Uterus (tissue), 4 donors: ENCODE measurements at regions of chr14 and their contacts with region 1.

Region 1: GRCh38 chr14:34875031-34875922 is at the start of gene BAZ1A:
- DNase-seq: peak; percentile 67 to 68
- H3K4me3 ChIP-seq: peak within 1 kb of the TSS; percentile 83 to 92
- H3K27ac ChIP-seq: peak within 1 kb of the TSS; percentile 97 to 100
- H3K4me1 ChIP-seq: peaks cover 0 to 5% of the 10 kb centered on the region in 2 donors
- H3K27me3 ChIP-seq: no peaks in the 10 kb centered on the region
- CTCF ChIP-seq: peak in 2 of 4 experiments; percentile 5 to 28
- POLR2A ChIP-seq: peak; percentile 80 to 87
- total RNA-seq, gene BAZ1A: 11.8 to 42.0 (median 27.3) TPM

Region 2: DNA sequence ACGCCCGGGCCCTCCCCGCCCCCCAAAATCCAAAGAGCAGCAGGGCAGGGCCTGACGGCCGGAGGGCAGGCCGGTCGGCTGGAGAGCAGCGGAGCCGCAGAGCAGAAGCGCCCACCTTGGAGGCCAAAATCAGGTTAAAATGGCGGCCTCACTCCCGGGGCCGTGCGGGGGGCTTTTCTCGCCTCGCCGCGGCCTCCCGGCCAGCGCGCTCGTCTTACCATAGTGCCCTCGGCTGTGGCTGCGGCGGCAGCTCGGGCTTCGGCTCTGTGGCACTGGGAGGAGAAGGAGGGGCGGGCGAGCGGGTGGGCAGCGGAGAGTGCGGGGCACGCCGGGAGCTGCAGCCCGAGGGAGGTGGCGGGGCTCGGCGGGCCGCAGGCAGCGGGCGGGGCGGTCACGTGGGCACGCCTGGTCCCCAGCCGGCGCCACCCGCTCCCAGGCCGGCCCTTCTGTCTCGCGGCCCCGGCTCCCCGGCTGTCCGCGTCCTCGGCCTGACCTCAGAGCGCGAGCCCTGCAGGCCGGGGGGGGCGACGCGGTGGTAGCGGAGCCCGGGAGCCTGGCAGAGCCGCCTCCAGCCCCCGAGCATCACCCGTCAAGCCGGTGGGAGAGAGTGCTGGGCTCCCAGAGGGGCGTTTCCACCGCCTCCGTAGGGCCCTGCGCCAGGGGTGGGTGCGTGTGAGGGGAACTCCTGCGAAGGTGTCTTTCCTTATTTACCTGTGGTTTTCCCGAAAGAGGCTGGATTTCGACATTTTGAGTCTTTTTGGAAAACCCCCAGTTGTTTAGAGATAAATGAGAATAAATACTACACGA is 160.8 kb before region 1 on chr14 and contains the start of gene CFL2:
- intact Hi-C with region 1: loop called (anchors 5 kb)
- DNase-seq: peak; percentile 83
- H3K4me3 ChIP-seq: peak within 1 kb of the TSS; percentile 86 to 96
- H3K27ac ChIP-seq: peak within 1 kb of the TSS; percentile 98 to 100
- H3K4me1 ChIP-seq: no peaks in the 10 kb centered on the region
- H3K27me3 ChIP-seq: no peaks in the 10 kb centered on the region
- CTCF ChIP-seq: peak in 1 of 4 experiments; percentile 6
- POLR2A ChIP-seq: peak; percentile 78 to 79
- total RNA-seq, gene CFL2: 108 to 231 (median 139) TPM

Region 3: GRCh38 chr14:34982417-34983147 is 107.3 kb after region 1 on chr14 and contains the start of gene SRP54:
- intact Hi-C with region 1: loop called (anchors 10 kb)
- DNase-seq: peak; percentile 97 to 99
- H3K4me3 ChIP-seq: peak within 1 kb of the TSS; percentile 95 to 98
- H3K27ac ChIP-seq: peak within 1 kb of the TSS; percentile 97 to 99
- H3K4me1 ChIP-seq: peaks cover 10 to 25% of the 10 kb centered on the region in 2 donors
- H3K27me3 ChIP-seq: no peaks in the 10 kb centered on the region
- CTCF ChIP-seq: peak; percentile 4 to 54 (median 24)
- POLR2A ChIP-seq: peak; percentile 92 to 94
- total RNA-seq, gene SRP54: 41.7 to 219 (median 82.1) TPM